ENCODE measurements at regions of chr7 and their contacts with region 1.

Region 1: DNA sequence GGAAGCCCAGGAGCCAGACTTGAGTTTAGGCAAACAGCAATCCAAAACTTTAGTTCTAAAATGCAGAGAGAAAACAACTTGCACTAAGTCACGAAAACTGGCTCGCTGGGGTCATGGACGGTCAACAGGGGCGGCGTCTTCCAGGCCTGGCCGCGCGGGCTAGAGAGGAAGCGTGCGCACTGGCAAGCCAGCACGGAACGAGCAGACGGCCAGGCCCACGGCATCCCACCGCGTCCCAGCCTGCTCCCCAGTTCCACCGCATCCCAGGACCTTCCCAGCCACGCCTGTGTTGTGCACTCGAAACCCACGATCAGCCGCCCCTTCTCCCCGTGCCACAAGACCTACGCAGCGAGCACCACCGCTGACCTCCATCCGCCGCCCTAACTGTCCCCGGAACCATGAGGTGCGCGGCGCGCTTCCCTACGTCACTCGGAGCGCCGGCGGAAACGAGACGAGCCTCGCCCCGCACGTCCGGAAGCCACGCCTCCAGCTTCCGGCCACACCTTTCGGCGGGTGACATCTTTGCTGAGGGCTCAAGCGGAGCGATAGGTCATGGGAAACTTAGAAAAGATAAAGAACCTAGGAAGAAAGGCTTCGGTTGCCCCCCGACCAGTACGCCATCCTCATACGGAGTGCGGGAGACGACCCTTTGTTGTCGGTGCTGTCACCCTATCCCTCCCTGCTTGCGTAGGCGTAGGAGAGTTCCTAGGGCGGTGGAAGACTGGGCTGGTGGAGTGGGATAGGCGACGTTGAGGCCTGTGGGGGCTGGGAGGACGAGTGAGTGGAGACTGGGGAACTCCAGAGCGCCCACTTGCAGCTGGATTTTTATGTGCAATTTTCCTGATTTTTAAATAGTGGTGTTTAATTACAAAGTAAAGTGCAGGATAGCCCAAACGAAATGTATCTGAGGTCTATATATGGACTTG is at the start of gene TBRG4:
- DNase-seq: peak; percentile 97
- ATAC-seq: peak; percentile 95
- H3K4me3 Mint-ChIP-seq: peak within 1 kb of the TSS; percentile 94
- H3K27ac Mint-ChIP-seq: peak within 1 kb of the TSS; percentile 96
- H3K4me1 Mint-ChIP-seq: peaks cover 35% of the 10 kb centered on the region
- H3K27me3 Mint-ChIP-seq: peaks cover 2% of the 10 kb centered on the region
- total RNA-seq, gene TBRG4: 158 to 163 TPM

Region 2: GRCh38 chr7:44573464-44574286 is 537.9 kb before region 1 on chr7 and contains the start of gene DDX56:
- CTCF ChIA-PET with region 1: no interaction called
- POLR2A ChIA-PET with region 1: no interaction called
- intact Hi-C with region 1: loop called in 1 of 2 experiments (anchors 2 kb)
- DNase-seq: peak; percentile 97
- ATAC-seq: peak; percentile 98
- H3K4me3 Mint-ChIP-seq: peak within 1 kb of the TSS; percentile 90
- H3K27ac Mint-ChIP-seq: peak within 1 kb of the TSS; percentile 94
- H3K4me1 Mint-ChIP-seq: peaks cover 41% of the 10 kb centered on the region
- H3K27me3 Mint-ChIP-seq: no peaks in the 10 kb centered on the region
- total RNA-seq, gene DDX56: 98.5 to 104 TPM

Region 3: GRCh38 chr7:44581879-44582603 is 529.5 kb before region 1 on chr7 and contains the start of gene TMED4:
- CTCF ChIA-PET with region 1: no interaction called
- POLR2A ChIA-PET with region 1: no interaction called
- intact Hi-C with region 1: loop called in 1 of 2 experiments (anchors 1 kb)
- DNase-seq: peak; percentile 100
- ATAC-seq: peak; percentile 95
- H3K4me3 Mint-ChIP-seq: peak within 1 kb of the TSS; percentile 85
- H3K27ac Mint-ChIP-seq: peak within 1 kb of the TSS; percentile 92
- H3K4me1 Mint-ChIP-seq: peaks cover 33% of the 10 kb centered on the region
- H3K27me3 Mint-ChIP-seq: no peaks in the 10 kb centered on the region
- total RNA-seq, gene TMED4: 71.6 to 73.0 TPM

Region 4: GRCh38 chr7:44606450-44607254 is 504.9 kb before region 1 on chr7 and contains the start of gene OGDH:
- CTCF ChIA-PET with region 1: no interaction called
- POLR2A ChIA-PET with region 1: no interaction called
- intact Hi-C with region 1: loop called (anchors 1 to 2 kb)
- DNase-seq: peak; percentile 100
- ATAC-seq: peak; percentile 98
- H3K4me3 Mint-ChIP-seq: peak within 1 kb of the TSS; percentile 92
- H3K27ac Mint-ChIP-seq: peak within 1 kb of the TSS; percentile 97
- H3K4me1 Mint-ChIP-seq: peaks cover 33% of the 10 kb centered on the region
- H3K27me3 Mint-ChIP-seq: no peaks in the 10 kb centered on the region
- total RNA-seq, gene OGDH: 80.3 to 90.1 TPM

Region 5: GRCh38 chr7:44973610-44974401 is 137.8 kb before region 1 on chr7:
- CTCF ChIA-PET with region 1: interaction called, 22 read pairs
- POLR2A ChIA-PET with region 1: interaction called, 5 read pairs
- intact Hi-C with region 1: no loop called
- DNase-seq: peak; percentile 74
- ATAC-seq: no peak
- H3K4me3 Mint-ChIP-seq: no peak overlapping the region
- H3K27ac Mint-ChIP-seq: peak overlapping the region; percentile 42
- H3K4me1 Mint-ChIP-seq: peaks cover 49% of the 10 kb centered on the region
- H3K27me3 Mint-ChIP-seq: no peaks in the 10 kb centered on the region

Region 6: GRCh38 chr7:44986218-44987053 is 125.1 kb before region 1 on chr7:
- CTCF ChIA-PET with region 1: no interaction called
- POLR2A ChIA-PET with region 1: interaction called, 7 read pairs
- intact Hi-C with region 1: loop called (anchors 1 to 2 kb)
- DNase-seq: peak; percentile 99
- ATAC-seq: peak; percentile 90
- H3K4me3 Mint-ChIP-seq: peak overlapping the region; percentile 99
- H3K27ac Mint-ChIP-seq: peak overlapping the region; percentile 99
- H3K4me1 Mint-ChIP-seq: peaks cover 52% of the 10 kb centered on the region
- H3K27me3 Mint-ChIP-seq: no peaks in the 10 kb centered on the region

Region 7: GRCh38 chr7:45136106-45137060 is 24.8 kb after region 1 on chr7:
- CTCF ChIA-PET with region 1: interaction called, 37 read pairs
- POLR2A ChIA-PET with region 1: interaction called, 3 read pairs
- intact Hi-C with region 1: loop called in 1 of 2 experiments (anchors 1 kb)
- DNase-seq: peak; percentile 82
- ATAC-seq: peak; percentile 91
- H3K4me3 Mint-ChIP-seq: no peak overlapping the region
- H3K27ac Mint-ChIP-seq: no peak overlapping the region
- H3K4me1 Mint-ChIP-seq: peaks cover 11% of the 10 kb centered on the region
- H3K27me3 Mint-ChIP-seq: no peaks in the 10 kb centered on the region